Transverse colon (tissue), 4 donors: ENCODE measurements at regions of chr2 and their contacts with region 1.

Region 1: DNA sequence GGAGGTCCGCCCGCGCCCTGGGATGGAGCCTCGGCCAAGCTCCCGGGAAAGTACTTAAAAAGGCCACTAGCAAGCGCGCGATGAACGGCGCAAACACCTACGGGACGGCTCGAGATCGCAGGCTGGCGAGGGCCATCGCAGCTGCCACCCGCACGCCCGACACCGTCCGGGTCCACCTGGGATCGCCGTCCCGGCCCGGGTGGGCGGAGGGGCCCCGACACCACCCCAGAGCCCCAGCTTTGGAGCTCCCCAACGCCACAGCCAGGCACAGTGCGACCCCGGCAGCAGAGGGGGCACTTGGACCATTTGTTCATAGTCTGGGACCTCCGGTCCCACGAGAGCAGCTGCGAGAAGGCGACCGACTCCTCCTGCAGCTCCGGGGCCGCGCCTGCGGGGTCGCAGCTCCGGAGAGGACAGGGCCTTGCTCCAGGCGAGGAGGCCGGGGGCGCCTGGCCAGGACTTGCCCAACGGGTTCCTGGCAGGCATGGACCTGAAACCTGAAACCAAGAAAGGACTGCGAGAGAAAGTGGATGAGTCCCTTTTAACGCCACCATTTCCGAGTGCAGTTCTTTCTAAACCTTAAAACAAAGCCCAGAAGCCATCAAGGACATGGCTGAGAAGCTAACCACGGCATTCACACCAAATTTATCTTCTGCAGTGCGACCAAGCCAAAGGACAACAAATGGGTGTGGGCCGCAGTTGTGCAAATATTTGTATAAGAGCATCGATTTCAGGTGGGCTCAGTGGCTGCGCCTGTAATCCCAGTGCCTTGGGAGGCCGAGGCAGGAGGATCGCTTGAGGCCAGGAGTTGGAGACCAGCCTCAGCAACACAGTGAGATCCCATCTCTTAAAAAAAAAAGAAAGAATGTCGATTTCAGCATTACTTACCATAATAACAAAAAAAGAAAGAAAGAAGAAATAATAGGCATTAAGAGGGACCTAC is 54.0 kb upstream of the IMP4 start:
- DNase-seq: no peak
- H3K4me3 ChIP-seq: no peak overlapping the region
- H3K27ac ChIP-seq: no peak overlapping the region
- H3K4me1 ChIP-seq: peaks cover 0 to 5% (median 0%) of the 10 kb centered on the region in 4 donors
- H3K27me3 ChIP-seq: no peaks in the 10 kb centered on the region
- CTCF ChIP-seq: no peak
- EP300 ChIP-seq: no peak
- POLR2A ChIP-seq: no peak

Region 2: GRCh38 chr2:130019402-130019801 is 269.3 kb before region 1 on chr2:
- in situ Hi-C with region 1: no loop called
- intact Hi-C with region 1: no loop called
- DNase-seq: no peak
- H3K4me3 ChIP-seq: no peak overlapping the region
- H3K27ac ChIP-seq: no peak overlapping the region
- H3K4me1 ChIP-seq: no peaks in the 10 kb centered on the region
- H3K27me3 ChIP-seq: no peaks in the 10 kb centered on the region
- CTCF ChIP-seq: no peak
- EP300 ChIP-seq: no peak
- POLR2A ChIP-seq: no peak

Region 3: GRCh38 chr2:130727286-130728018 is 438.7 kb after region 1 on chr2:
- in situ Hi-C with region 1: no loop called
- intact Hi-C with region 1: no loop called
- DNase-seq: peak; percentile 83
- H3K4me3 ChIP-seq: peak overlapping the region; percentile 35 to 59 (median 44)
- H3K27ac ChIP-seq: peak overlapping the region; percentile 44 to 73 (median 70)
- H3K4me1 ChIP-seq: peaks cover 8 to 21% (median 16%) of the 10 kb centered on the region in 4 donors
- H3K27me3 ChIP-seq: peaks cover 8% of the 10 kb centered on the region
- CTCF ChIP-seq: no peak
- EP300 ChIP-seq: no peak
- POLR2A ChIP-seq: peak; percentile 41

Region 4: DNA sequence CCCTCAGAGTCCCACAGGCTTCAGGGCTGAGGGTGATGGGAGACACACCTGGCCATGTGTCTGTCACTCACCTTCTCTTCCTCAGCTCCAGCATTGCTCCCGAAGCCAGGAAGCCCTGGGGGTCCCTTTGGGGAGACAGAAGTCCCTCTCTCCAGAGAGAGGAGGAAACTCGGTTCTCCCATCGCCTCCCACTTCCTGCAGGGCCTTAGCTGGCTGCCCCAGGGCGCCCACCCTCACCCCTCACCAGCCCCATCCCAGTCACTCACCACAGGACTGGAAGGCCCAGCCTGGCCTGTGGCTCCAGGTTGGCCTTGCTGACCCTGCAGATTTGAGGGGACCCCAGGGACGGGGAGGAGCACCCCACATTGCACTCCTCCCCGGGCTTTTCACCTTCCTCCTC is 1077.9 kb after region 1 on chr2:
- in situ Hi-C with region 1: loop called in 1 of 4 experiments (anchors 25 kb)
- intact Hi-C with region 1: no loop called
- DNase-seq: no peak
- H3K4me3 ChIP-seq: no peak overlapping the region
- H3K27ac ChIP-seq: no peak overlapping the region
- H3K4me1 ChIP-seq: no peaks in the 10 kb centered on the region
- H3K27me3 ChIP-seq: peaks cover 18% of the 10 kb centered on the region
- CTCF ChIP-seq: no peak
- EP300 ChIP-seq: no peak
- POLR2A ChIP-seq: no peak